Posterior cingulate gyrus (tissue), 11 donors: ENCODE measurements at regions of chr21 and their contacts with region 1.

Region 1: DNA sequence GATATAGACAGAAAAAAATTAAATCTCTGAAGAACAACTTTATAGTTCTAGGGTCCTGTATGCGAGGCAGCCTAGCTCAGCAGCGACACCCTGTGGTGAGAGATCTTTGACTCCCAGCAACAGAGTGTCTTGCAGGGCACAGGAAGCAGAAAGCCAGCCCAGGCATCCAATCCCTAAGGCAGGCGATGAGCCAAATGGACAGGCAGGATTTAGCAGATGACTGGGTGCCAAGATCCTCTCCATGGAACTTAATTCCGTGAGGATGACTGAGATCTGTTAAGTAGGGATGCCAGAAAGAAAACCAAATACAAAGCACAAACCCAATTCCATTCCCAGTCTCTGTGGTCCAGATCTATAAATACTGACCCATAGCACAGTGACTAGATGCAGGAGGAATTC is 38.8 kb downstream of the HLCS start:
- DNase-seq: peak; percentile 71 to 97 (median 89)

Region 2: DNA sequence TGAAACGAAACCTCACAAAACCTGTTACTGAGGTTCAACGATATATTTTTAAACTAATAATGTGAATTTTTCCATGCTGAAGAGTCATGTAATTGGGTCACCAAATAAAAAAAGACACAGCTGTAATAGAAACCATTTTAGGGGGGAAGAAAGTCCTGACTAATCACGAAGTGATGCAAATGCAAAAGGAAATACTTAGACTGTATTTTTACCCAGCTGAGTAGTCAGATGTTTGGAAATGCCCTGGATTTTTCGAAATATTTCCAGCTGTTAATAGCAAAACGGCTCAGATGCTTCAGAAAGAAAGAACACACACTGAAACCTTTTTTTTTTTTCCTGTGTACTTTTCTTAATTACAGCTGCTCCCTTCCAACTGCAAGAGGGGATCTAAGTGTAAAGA is 1077.7 kb before region 1 on chr21:
- intact Hi-C with region 1: no loop called
- DNase-seq: no peak

Region 3: GRCh38 chr21:36429947-36430546 is 497.7 kb before region 1 on chr21:
- intact Hi-C with region 1: loop called (anchors 10 kb)
- DNase-seq: peak in 1 of 10 donors; percentile 60

Region 4: GRCh38 chr21:36504067-36505058 is 423.4 kb before region 1 on chr21:
- intact Hi-C with region 1: loop called (anchors 1 kb)
- DNase-seq: peak in 4 of 10 donors; percentile 24 to 51 (median 42)

Region 5: DNA sequence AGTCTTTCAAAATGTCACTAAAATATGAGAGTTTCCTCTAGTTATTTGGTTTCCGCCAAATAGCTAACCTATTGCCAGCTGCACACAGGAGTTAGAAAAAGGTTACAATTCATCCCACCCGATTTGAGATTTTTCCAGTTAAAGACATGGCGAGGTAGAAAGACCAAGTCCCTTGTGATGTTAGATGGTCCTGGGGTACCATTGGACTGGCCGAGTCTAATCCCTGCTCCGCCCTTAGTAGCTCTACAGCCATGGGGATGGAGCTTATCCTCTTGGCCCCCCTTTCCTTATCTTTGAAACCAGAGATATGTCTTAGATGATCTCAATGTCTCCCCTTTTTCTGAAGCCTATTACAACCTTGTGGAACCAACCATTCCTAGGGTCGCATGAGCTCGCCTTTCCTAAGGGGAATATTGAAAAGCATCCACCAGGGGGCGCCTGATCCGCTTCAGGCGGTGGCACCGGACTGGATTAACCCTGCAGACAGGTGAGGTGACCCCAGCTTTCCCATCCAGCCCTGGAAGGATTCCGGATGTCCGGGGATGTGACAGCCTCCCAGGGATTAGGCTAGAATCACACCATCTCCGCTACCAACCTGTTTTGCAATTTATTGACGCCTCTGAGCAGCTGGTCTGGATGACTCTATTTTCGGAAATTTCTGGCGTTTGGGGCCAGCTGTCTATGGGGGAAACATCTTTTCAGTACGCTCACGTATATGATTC is 297.1 kb before region 1 on chr21:
- intact Hi-C with region 1: loop called (anchors 10 kb)
- DNase-seq: peak in 6 of 10 donors; percentile 48 to 86 (median 67)

Region 6: DNA sequence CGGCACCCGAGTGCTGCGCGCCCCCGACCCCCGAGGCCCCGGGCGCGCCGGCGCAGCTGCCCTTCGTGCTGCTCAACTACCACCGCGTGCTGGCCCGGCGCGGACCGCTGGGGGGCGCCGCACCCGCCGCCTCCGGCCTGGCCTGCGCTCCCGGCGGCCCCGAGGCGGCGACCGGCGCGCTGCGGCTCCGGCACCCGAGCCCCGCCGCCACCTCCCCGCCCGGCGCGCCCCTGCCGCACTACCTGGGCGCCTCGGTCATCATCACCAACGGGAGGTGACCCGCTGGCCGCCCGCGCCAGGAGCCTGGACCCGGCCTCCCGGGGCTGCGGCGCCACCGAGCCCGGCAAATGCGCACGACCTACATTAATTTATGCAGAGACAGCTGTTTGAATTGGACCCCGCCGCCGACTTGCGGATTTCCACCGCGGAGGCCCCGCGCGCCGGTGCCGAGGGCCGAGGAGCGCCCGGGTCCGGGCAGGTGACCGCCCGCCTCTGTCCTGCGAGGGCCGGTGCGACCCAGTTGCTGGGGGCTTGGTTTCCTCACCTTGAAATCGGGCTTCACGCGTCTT is 179.8 kb before region 1 on chr21:
- intact Hi-C with region 1: loop called (anchors 5 kb)
- DNase-seq: peak in 8 of 10 donors; percentile 37 to 96 (median 63)